ENCODE measurements at regions of chr5 and their contacts with region 1.

Region 1: GRCh38 chr5:54243473-54244080 is 66.8 kb downstream of the ARL15 start:
- DNase-seq: peak in 1 of 3 donors; percentile 55
- ATAC-seq: peak; percentile 37
- H3K4me3 ChIP-seq: no peak overlapping the region
- H3K4me1 ChIP-seq: no peaks in the 10 kb centered on the region
- CTCF ChIP-seq: peak; percentile 41

Region 2: GRCh38 chr5:54180616-54181015 is 63.0 kb before region 1 on chr5:
- intact Hi-C with region 1: no loop called
- DNase-seq: no peak
- ATAC-seq: no peak
- H3K4me3 ChIP-seq: no peak overlapping the region
- H3K4me1 ChIP-seq: peaks cover 32% of the 10 kb centered on the region
- CTCF ChIP-seq: no peak

Region 3: DNA sequence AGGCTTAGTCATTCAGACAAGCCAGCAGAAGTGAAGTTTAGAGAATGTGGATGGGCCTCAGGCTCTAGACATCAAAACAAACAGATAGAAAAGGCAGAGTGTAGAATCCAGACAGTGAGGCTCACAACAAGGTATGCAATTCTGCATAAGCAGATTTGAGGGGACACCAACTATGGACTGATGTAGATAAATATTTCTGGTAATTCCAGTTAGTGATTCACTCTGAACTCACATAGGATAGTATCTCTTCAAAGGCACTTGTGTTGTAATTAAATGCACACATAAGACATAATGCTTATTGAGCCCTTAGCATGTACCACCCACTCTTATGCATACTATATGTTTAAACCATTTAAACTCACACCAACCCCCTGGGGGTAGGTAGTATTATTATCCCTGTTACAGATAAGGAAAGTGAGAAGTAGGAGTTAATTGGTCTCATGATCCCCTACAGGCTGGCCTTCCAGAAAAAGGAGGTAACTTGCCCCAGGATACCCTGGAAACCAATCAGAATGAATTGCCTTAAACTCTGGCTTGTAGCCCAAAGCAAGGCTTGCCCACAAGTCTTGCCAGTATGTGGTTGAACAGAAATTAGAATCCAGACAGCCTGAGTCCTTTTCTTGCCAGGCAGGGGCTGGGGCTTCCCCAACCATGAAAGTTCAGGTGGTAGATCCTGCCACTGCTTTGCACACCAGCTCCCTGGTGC is 172.5 kb after region 1 on chr5:
- intact Hi-C with region 1: loop called (anchors 5 to 10 kb)
- DNase-seq: no peak
- ATAC-seq: no peak
- H3K4me3 ChIP-seq: no peak overlapping the region
- H3K4me1 ChIP-seq: no peaks in the 10 kb centered on the region
- CTCF ChIP-seq: no peak

Region 4: GRCh38 chr5:54421976-54422375 is 178.4 kb after region 1 on chr5:
- intact Hi-C with region 1: loop called (anchors 5 to 10 kb)
- DNase-seq: no peak
- ATAC-seq: no peak
- H3K4me3 ChIP-seq: no peak overlapping the region
- H3K4me1 ChIP-seq: no peaks in the 10 kb centered on the region
- CTCF ChIP-seq: no peak

Region 5: GRCh38 chr5:54492178-54492577 is 248.6 kb after region 1 on chr5:
- intact Hi-C with region 1: loop called in 1 of 2 experiments (anchors 10 kb)
- DNase-seq: no peak
- ATAC-seq: no peak
- H3K4me3 ChIP-seq: no peak overlapping the region
- H3K4me1 ChIP-seq: no peaks in the 10 kb centered on the region
- CTCF ChIP-seq: no peak